Dorsolateral prefrontal cortex (tissue), 120 donors: ENCODE measurements at regions of chr14 and their contacts with region 1.

Region 1: DNA sequence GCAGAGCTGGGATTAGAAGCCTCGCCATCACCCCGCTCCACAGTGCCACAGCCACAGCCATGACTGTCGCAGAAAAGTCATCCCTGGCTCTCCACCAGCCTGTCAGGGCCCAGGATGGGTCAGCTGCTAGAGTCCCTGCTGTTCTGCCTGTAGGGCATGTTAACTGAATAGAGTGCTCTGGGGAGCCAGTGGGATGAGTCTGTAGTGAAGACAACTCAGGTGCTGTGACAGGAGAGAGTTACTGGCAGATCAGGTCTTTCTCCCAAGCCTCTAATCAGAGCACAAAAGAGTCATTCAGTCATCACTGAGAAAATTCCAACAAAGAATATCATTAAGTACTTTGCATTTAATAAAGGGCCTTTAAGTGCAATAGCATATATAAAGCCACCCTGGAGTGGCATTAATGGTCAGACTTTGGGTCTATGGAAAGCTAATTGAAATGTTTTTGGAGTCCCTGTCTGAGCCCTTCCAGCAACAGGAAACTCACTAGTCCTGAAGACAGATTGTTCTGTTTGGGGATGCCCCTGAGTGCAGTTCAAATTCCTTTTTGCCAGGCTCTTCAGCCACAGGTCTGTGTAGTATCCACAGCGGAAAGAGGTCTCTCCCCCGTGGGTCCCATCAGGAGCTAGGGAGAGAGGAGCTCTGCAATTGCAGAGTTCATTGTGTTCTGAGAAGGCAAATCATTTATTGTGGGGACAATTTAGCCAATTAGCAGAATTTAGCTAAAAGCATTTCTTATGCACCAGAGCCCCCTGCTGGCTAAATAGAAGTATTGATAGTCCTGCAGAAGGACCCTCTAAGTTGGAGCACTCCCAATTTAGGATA is 45.2 kb upstream of the C14orf132 start:
- DNase-seq: peak in 3 of 10 donors; percentile 15 to 39 (median 17)
- H3K4me3 ChIP-seq: no peak overlapping the region
- H3K27ac ChIP-seq: no peak overlapping the region
- H3K27me3 ChIP-seq: peaks cover 0 to 17% (median 0%) of the 10 kb centered on the region in 45 donors
- CTCF ChIP-seq: peak; percentile 77 to 99 (median 91)

Region 2: DNA sequence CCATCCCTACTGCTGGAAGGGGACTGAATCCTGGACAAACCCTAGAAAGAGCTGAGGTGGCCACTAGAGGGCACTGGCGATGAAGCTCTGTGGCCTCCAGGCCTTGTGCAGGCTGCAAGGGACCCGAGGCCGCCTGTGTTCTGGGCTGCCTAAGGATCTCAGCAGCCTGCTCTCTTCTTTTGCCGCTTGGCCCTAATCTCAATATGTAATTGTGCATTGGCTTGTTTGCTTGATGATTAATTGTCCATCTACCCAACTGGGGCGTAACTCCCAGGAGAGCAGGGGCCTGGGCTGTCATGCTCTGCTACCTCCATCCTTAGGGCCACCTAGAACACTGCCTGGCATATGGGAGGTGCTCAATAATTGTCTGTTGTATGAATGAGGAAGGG is 551.4 kb before region 1 on chr14:
- intact Hi-C with region 1: loop called in 1 of 2 experiments (anchors 5 kb)
- DNase-seq: peak; percentile 79 to 91 (median 88)
- H3K4me3 ChIP-seq: no peak overlapping the region
- H3K27ac ChIP-seq: peak overlapping the region in 39 of 59 donors; percentile 2 to 75 (median 50)
- H3K27me3 ChIP-seq: no peaks in the 10 kb centered on the region
- CTCF ChIP-seq: peak; percentile 47 to 97 (median 91)

Region 3: GRCh38 chr14:95561001-95561412 is 433.0 kb before region 1 on chr14:
- intact Hi-C with region 1: loop called (anchors 2 kb)
- DNase-seq: peak; percentile 73 to 94 (median 88)
- H3K4me3 ChIP-seq: peak overlapping the region in 3 of 59 donors; percentile 2 to 9 (median 6)
- H3K27ac ChIP-seq: no peak overlapping the region
- H3K27me3 ChIP-seq: no peaks in the 10 kb centered on the region
- CTCF ChIP-seq: peak; percentile 89 to 100 (median 98)

Region 4: GRCh38 chr14:95774265-95775160 is 219.5 kb before region 1 on chr14:
- intact Hi-C with region 1: loop called in 1 of 2 experiments (anchors 10 kb)
- DNase-seq: peak in 4 of 10 donors; percentile 10 to 52 (median 37)
- H3K4me3 ChIP-seq: no peak overlapping the region
- H3K27ac ChIP-seq: no peak overlapping the region
- H3K27me3 ChIP-seq: peaks cover 0 to 11% (median 0%) of the 10 kb centered on the region in 45 donors
- CTCF ChIP-seq: peak; percentile 64 to 94 (median 86)

Region 5: DNA sequence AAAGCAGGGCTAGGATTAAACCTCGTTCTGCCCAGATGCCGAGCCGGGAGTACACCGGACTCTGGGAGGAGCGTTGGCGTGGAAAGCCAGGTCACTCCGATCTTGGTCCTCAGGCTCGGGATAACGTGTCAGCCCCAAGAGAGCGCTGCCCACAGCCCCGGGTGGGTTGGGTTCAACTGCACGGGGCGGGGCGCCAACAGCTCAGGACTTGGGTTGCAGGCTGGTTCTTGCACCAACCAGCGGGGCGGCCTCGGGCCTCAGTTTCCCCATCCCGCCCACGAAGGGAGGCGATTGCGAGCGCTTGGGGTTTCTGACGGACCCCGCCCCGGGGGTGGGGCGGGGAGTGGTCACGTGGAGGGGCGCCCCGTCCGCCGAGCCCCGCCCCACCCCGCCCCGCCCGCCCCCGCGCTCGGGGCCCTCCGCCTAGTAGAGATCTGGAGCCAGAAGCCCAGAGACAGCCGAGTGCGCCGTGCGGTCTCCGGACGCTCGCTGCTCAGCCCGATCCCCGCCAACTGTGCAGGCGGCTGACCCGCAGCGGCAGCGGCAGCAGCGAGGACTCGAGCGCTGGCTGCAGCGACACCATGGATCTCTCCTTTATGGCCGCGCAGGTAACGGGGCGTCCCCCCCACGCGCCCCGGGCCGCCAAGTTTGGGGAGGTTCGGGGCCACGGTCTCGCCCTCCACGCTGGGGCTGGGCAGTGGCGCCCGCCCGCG is 45.1 kb after region 1 on chr14 and contains the start of gene C14orf132:
- intact Hi-C with region 1: loop called in 1 of 2 experiments (anchors 5 kb)
- DNase-seq: peak; percentile 66 to 86 (median 76)
- H3K4me3 ChIP-seq: peak within 1 kb of the TSS; percentile 45 to 98 (median 85)
- H3K27ac ChIP-seq: peak within 1 kb of the TSS in 58 of 59 donors; percentile 42 to 96 (median 89)
- H3K27me3 ChIP-seq: no peaks in the 10 kb centered on the region
- CTCF ChIP-seq: peak in 7 of 56 donors; percentile 2 to 27 (median 16)
- total RNA-seq, gene C14orf132: 92.3 to 230 (median 143) TPM

Region 6: GRCh38 chr14:96275177-96276112 is 281.5 kb after region 1 on chr14:
- intact Hi-C with region 1: loop called (anchors 2 to 5 kb)
- DNase-seq: peak; percentile 78 to 88 (median 84)
- H3K4me3 ChIP-seq: peak overlapping the region in 29 of 59 donors; percentile 3 to 46 (median 25)
- H3K27ac ChIP-seq: peak overlapping the region; percentile 18 to 98 (median 87)
- H3K27me3 ChIP-seq: no peaks in the 10 kb centered on the region
- CTCF ChIP-seq: peak; percentile 88 to 99 (median 98)

Region 7: DNA sequence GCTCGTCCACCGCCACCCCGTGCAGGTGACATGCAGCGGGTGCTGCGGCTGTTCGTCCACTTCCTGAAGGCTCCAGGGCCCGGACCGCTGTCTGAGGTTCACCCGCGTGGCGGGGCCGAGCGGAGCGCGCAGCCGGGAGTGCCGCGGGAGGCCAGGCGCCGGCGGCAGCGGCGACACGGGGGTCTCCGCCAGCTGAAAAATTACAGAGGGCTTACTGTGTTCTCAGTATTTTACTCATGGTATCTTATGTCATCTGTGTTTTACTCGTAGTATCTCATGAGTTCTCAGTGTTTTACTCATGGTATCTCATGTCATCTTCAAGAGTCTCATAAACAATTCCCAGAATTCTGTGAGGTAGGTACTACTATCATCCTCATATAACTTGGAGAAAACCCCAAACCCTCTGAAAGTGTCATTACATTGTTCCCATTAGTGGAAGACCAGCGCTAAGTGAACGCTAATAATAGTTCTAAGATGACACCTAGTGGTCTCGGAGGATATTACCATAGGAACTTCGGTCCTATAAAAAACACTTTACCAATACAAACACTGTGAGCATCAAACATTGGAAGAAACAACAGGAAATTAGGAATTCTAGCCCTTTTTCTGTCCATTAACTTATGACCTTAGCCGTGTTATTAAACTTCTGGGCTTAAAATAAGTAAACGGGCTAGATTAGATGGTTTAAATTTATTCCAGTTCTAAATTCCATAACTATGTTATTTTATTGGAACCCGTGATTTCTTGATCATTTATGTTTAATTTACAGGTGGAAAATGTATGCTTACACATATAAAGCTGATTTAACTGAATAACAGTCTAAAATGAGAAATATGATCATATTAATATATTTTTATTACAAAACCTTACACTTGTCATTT is 430.4 kb after region 1 on chr14:
- intact Hi-C with region 1: loop called in 1 of 2 experiments (anchors 10 kb)
- DNase-seq: peak in 2 of 10 donors; percentile 15 to 52
- H3K4me3 ChIP-seq: peak overlapping the region; percentile 27 to 70 (median 55)
- H3K27ac ChIP-seq: peak overlapping the region in 23 of 59 donors; percentile 9 to 89 (median 72)
- H3K27me3 ChIP-seq: no peaks in the 10 kb centered on the region
- CTCF ChIP-seq: peak; percentile 72 to 96 (median 86)